Heart right ventricle (tissue), 16 donors: ENCODE measurements at regions of chr22 and their contacts with region 1.

Region 1: DNA sequence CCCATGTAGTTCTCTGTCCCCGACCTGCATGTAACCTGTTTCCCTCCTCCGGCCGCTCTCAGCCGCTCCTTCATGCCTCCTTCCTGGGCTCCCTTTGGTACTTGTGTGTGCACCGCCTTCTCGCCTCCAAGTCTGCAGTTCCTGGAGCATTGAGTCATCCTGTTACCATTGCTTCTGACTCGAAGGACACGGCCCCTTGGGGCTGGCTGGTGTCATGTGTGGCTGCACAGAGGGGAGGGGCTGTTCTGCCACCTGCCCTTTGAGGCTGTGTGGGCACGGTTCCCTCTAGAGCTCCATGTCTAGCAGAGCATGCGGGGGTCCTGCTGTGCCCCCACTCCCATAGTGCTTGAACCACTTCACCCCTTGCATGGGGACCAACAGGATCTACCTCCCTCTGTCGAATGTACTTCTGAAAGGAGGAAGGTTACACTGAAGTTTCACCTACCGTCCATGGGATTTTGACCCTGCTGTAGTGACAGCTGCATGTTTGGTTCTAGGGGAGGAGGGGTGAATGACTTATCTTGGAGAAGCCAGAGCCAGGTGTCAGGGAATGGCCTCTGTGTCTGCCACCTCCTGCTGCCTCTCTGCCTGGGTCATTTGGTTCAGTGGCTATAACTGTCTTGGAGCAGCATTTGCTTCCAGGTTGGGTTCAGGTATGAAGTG is 39.6 kb downstream of the BCR start:
- DNase-seq: no peak
- ATAC-seq: peak in 2 of 8 donors; percentile 5 to 17
- H3K4me3 ChIP-seq: no peak overlapping the region
- H3K27ac ChIP-seq: peak overlapping the region in 4 of 10 donors; percentile 48 to 78 (median 71)
- H3K4me1 ChIP-seq: peaks cover 54 to 100% (median 90%) of the 10 kb centered on the region in 9 donors
- H3K27me3 ChIP-seq: no peaks in the 10 kb centered on the region
- CTCF ChIP-seq: no peak

Region 2: DNA sequence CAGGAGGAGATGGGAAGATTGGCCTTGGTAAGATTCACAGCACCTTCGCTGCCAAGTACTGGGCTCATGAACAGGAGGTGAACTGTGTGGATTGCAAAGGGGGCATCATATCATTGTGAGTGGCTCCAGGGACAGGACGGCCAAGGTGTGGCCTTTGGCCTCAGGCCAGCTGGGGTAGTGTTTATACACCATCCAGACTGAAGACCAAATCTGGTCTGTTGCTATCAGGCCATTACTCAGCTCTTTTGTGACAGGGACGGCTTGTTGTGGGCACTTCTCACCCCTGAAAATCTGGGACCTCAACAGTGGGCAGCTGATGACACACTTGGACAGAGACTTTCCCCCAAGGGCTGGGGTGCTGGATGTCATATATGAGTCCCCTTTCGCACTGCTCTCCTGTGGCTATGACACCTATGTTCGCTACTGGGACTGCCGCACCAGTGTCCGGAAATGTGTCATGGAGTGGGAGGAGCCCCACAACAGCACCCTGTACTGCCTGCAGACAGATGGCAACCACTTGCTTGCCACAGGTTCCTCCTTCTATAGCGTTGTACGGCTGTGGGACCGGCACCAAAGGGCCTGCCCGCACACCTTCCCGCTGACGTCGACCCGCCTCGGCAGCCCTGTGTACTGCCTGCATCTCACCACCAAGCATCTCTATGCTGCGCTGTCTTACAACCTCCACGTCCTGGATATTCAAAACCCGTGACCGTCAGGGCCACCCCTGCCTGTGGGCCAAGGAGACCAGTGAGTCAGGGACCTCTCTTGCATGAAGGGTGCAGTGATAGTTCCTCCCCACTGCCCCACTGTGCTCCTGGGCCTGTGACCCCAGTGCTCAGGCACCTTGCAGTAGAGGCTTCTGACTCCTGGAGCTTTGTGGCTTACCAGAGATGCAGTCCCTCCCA is 44.0 kb after region 1 on chr22:
- intact Hi-C with region 1: loop called in 1 of 10 experiments (anchors 5 kb)
- DNase-seq: no peak
- ATAC-seq: peak in 5 of 8 donors; percentile 7 to 36 (median 25)
- H3K4me3 ChIP-seq: no peak overlapping the region
- H3K27ac ChIP-seq: peak overlapping the region in 3 of 10 donors; percentile 5 to 66 (median 11)
- H3K4me1 ChIP-seq: peaks cover 0 to 9% (median 0%) of the 10 kb centered on the region in 9 donors
- H3K27me3 ChIP-seq: no peaks in the 10 kb centered on the region
- CTCF ChIP-seq: no peak